ENCODE measurements at regions of chr1 and their contacts with region 1.

Region 1: DNA sequence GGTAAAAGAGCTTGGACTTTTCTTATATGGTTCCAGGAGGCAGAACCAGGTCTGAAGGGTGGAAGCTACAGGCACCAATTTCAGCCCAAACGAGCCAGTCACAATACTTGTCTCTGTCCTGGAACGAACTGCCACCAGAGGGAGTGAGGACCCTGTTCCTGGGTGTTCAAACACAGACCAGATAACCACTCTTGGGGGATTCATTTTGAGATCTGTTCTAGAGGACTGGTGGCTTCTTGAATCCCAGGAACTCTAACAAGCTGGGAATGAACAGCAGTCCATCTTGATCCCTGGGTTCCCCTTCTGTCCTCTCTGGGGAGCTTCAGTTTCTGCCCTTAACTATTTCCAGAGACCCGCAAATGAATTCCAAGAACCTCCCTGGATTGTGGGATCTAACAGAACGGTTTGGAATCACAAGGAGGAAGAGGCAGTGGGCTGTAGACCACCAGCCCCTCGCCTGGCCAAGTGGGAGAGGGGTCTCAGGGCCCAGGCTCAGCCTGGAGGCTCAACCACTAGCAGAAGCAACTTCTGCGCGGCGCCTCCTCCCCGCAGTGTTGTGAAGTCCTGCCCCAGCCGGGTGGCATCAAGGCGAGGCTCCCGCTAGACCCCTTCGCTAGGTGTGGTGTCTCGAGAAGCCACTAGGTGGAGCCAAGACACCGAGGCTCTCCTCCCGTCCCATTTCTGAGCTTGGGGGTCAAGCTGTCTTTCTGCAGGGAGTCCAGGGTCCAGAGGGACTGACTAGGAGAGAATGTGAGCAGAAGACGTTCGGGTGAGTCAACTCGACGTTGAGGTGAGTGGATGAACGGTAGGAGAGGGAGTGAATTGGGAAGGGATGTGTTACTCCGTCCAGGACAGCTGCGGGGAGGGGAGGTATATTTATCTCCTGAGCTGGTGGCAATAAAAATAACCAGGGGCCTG is 12.1 kb upstream of the NES start:
- DNase-seq: peak; percentile 83
- H3K4me3 Mint-ChIP-seq: no peak overlapping the region
- H3K27ac Mint-ChIP-seq: no peak overlapping the region
- H3K4me1 Mint-ChIP-seq: peaks cover 16% of the 10 kb centered on the region
- H3K27me3 Mint-ChIP-seq: peaks cover 55% of the 10 kb centered on the region

Region 2: GRCh38 chr1:156480411-156481192 is 208.7 kb before region 1 on chr1:
- CTCF ChIA-PET with region 1: no interaction called
- POLR2A ChIA-PET with region 1: no interaction called
- intact Hi-C with region 1: no loop called
- DNase-seq: peak; percentile 83
- H3K4me3 Mint-ChIP-seq: peak overlapping the region; percentile 39
- H3K27ac Mint-ChIP-seq: peak overlapping the region; percentile 79
- H3K4me1 Mint-ChIP-seq: peaks cover 66% of the 10 kb centered on the region
- H3K27me3 Mint-ChIP-seq: no peaks in the 10 kb centered on the region

Region 3: DNA sequence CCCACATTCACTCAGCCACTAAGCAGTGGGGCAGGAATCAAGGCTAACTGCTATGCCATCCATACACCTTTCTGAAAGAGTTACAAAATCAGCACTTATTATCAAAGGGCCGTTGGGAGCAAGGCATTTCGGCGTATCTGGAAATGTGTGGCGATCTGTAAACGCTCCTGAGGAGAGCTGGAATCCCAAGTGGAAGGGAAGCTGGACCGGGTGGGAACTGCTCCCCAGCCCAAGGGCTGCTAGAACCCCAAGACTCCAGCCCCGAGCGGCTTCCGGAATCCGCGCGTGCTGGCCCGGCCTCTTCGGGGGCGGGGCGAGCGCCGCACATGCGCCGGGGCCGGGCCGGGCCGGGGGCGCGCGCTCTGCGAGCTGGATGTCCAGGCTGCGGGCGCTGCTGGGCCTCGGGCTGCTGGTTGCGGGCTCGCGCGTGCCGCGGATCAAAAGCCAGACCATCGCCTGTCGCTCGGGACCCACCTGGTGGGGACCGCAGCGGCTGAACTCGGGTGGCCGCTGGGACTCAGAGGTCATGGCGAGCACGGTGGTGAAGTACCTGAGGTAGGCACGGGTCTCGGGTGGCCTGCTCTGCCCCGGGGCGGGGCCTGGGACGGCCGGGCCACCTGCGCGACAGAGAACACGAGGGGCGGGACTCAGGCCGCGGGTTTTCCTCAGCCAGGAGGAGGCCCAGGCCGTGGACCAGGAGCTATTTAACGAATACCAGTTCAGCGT is 97.7 kb before region 1 on chr1 and contains the start of gene NAXE:
- CTCF ChIA-PET with region 1: no interaction called
- POLR2A ChIA-PET with region 1: no interaction called
- intact Hi-C with region 1: no loop called
- DNase-seq: peak; percentile 77
- H3K4me3 Mint-ChIP-seq: peak within 1 kb of the TSS; percentile 79
- H3K27ac Mint-ChIP-seq: peak within 1 kb of the TSS; percentile 85
- H3K4me1 Mint-ChIP-seq: peaks cover 19% of the 10 kb centered on the region
- H3K27me3 Mint-ChIP-seq: no peaks in the 10 kb centered on the region
- total RNA-seq, gene NAXE: 73.6 to 76.7 TPM

Region 4: DNA sequence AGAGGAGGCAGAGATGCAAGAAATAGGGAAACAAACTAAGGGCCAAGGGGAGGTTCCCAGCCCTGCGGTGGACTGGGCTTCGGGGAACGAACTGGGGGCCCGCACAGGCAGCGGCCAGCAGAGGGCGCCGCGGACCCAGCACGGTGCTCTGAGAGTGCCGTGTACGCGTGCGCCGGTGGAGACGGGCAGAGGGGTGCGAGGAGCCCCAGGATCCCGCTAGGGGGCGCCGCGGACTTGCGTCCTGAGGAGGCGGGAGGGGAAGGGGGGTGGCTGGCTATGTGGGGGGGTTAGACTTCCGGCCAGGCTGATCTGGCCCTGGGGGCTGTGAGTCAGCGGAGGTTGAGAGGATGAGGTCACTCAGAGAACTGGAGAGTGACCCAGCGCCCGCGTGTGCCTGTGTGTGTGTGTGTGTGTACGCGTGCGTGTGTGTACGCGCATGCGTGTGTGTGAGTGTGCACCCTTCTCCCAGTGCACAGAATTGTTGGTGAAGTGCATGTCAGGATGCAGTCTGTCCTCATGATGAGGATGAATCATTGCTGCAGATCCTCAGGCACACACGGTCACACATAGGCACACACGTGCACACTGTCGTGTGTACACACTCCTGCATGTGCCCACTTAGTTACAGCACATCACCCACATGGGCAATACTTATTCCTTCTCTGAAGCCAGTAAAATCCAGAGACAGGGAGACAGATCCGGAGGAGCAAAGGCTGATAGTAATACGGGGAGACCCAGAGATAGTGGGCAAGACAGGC is 29.1 kb before region 1 on chr1:
- CTCF ChIA-PET with region 1: interaction called, 37 read pairs
- POLR2A ChIA-PET with region 1: no interaction called
- intact Hi-C with region 1: no loop called
- DNase-seq: peak; percentile 96
- H3K4me3 Mint-ChIP-seq: peak overlapping the region; percentile 81
- H3K27ac Mint-ChIP-seq: peak overlapping the region; percentile 82
- H3K4me1 Mint-ChIP-seq: peaks cover 37% of the 10 kb centered on the region
- H3K27me3 Mint-ChIP-seq: peaks cover 27% of the 10 kb centered on the region

Region 5: GRCh38 chr1:156705918-156706656 is 16.8 kb after region 1 on chr1:
- CTCF ChIA-PET with region 1: interaction called, 1,179 read pairs
- POLR2A ChIA-PET with region 1: interaction called, 14 read pairs
- intact Hi-C with region 1: loop called (anchors 1 kb)
- DNase-seq: peak; percentile 82
- H3K4me3 Mint-ChIP-seq: peak overlapping the region; percentile 75
- H3K27ac Mint-ChIP-seq: no peak overlapping the region
- H3K4me1 Mint-ChIP-seq: peaks cover 28% of the 10 kb centered on the region
- H3K27me3 Mint-ChIP-seq: peaks cover 24% of the 10 kb centered on the region

Region 6: DNA sequence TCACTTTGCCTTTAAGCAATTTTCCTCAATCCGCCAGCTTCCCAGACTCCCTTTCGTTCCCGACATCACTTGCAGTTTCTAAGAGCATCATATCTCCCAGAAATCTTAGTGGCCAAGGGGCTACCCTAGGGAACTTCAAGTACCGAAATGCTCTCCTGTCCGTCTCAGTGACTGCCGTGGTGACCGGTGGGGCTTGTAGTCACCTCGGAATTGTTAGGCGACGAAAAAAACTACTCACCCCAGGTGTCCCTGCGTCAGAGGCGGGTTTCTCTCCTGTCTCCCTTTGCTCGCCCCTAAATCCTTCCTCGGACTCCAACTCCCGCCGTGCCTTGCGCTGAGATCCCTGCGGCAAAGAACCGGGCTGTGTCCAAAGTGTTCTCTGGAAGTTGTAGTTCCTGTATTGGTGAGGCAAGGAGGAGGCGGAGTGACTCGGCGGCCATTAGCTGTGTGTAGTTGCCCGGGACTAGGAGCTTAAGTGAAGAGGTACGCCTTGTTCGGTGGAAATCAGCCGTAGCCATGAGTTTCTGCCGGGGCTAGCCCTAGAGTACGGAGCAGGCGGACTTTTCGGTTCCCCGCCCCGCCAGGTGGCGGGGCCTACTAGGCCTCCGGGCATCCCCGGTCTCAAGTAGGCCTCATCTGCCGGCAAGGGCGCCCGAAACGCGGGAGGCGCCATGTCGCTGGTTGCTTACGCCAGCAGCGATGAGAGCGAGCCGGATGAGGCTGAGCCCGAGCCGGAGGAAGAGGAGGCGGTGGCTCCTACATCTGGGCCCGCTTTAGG is 78.0 kb after region 1 on chr1 and contains the start of gene PRCC:
- CTCF ChIA-PET with region 1: interaction called, 21 read pairs
- POLR2A ChIA-PET with region 1: no interaction called
- intact Hi-C with region 1: no loop called
- DNase-seq: peak; percentile 99
- H3K4me3 Mint-ChIP-seq: no peak within 1 kb of the TSS
- H3K27ac Mint-ChIP-seq: no peak within 1 kb of the TSS
- H3K4me1 Mint-ChIP-seq: peaks cover 36% of the 10 kb centered on the region
- H3K27me3 Mint-ChIP-seq: no peaks in the 10 kb centered on the region
- total RNA-seq, gene PRCC: 58.6 to 67.2 TPM

Region 7: GRCh38 chr1:156797212-156797871 is 108.0 kb after region 1 on chr1:
- CTCF ChIA-PET with region 1: interaction called, 17 read pairs
- POLR2A ChIA-PET with region 1: interaction called, 4 read pairs
- intact Hi-C with region 1: no loop called
- DNase-seq: peak; percentile 71
- H3K4me3 Mint-ChIP-seq: no peak overlapping the region
- H3K27ac Mint-ChIP-seq: no peak overlapping the region
- H3K4me1 Mint-ChIP-seq: peaks cover 21% of the 10 kb centered on the region
- H3K27me3 Mint-ChIP-seq: no peaks in the 10 kb centered on the region

Region 8: GRCh38 chr1:156892190-156893047 is 203.1 kb after region 1 on chr1:
- CTCF ChIA-PET with region 1: interaction called, 58 read pairs
- POLR2A ChIA-PET with region 1: no interaction called
- intact Hi-C with region 1: loop called (anchors 10 kb)
- DNase-seq: peak; percentile 92
- H3K4me3 Mint-ChIP-seq: peak overlapping the region; percentile 48
- H3K27ac Mint-ChIP-seq: no peak overlapping the region
- H3K4me1 Mint-ChIP-seq: peaks cover 10% of the 10 kb centered on the region
- H3K27me3 Mint-ChIP-seq: peaks cover 46% of the 10 kb centered on the region

Region 9: GRCh38 chr1:157080714-157081113 is 391.4 kb after region 1 on chr1:
- CTCF ChIA-PET with region 1: no interaction called
- POLR2A ChIA-PET with region 1: no interaction called
- intact Hi-C with region 1: no loop called
- DNase-seq: no peak
- H3K4me3 Mint-ChIP-seq: no peak overlapping the region
- H3K27ac Mint-ChIP-seq: no peak overlapping the region
- H3K4me1 Mint-ChIP-seq: no peaks in the 10 kb centered on the region
- H3K27me3 Mint-ChIP-seq: peaks cover 7% of the 10 kb centered on the region

Region 10: DNA sequence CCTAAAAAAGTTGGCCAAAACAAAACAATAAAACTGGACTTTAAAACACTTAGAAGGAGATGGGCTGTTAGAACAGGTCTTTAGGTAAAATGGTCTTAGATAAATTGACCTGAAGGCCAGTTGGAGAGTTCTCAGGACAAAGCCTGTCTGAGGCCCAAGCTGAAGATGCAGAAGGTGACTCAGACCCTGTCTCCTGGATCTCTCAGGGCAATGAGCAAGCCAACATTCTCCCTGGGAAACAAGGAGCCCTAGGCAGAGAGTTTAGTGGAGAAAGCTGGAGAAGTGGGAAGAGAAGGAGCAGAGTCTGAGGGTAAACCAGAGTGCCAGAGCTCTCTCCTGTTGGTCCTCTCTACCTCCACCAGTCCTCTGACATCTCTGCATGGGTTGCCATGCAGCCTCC is 792.9 kb after region 1 on chr1:
- CTCF ChIA-PET with region 1: no interaction called
- POLR2A ChIA-PET with region 1: no interaction called
- intact Hi-C with region 1: no loop called
- DNase-seq: no peak
- H3K4me3 Mint-ChIP-seq: no peak overlapping the region
- H3K27ac Mint-ChIP-seq: no peak overlapping the region
- H3K4me1 Mint-ChIP-seq: no peaks in the 10 kb centered on the region
- H3K27me3 Mint-ChIP-seq: peaks cover under 1% of the 10 kb centered on the region

Measured in activated CD4-positive, alpha-beta memory T cell treated with anti-CD3 and anti-CD28 coated beads for 36 hours (primary cell).